IMR-90 (cell line): ENCODE measurements at regions of chrX and their contacts with region 1.

Region 1: DNA sequence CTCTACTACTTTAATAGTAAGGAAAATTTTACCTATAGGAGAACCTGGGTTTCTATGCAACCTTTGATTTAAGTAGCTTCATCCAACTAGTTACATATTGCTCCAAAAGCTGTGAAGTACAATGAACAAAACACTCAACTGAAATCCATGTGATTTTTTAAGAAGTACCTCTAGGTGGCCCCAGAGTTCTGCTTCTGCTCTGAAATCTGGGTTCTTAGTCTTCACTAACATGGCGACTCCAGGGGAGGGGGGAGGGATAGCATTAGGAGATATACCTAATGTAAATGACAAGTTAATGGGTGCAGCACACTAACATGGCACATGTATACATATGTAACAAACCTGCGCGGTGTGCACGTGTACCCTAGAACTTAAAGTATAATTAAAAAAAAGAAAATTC is 73.4 kb upstream of the MAGEB2 start:
- DNase-seq: peak; percentile 59
- ATAC-seq: peak; percentile 94
- H3K4me3 ChIP-seq: no peak overlapping the region
- H3K27ac ChIP-seq: no peak overlapping the region
- H3K4me1 ChIP-seq: no peaks in the 10 kb centered on the region
- H3K27me3 ChIP-seq: no peaks in the 10 kb centered on the region
- CTCF ChIP-seq: peak; percentile 58
- POLR2A ChIP-seq: no peak
- RAD21 ChIP-seq: peak; percentile 65

Region 2: GRCh38 chrX:30275498-30275897 is 133.5 kb after region 1 on chrX:
- CTCF ChIA-PET with region 1: no interaction called
- POLR2A ChIA-PET with region 1: no interaction called
- dilution Hi-C with region 1: no loop called
- in situ Hi-C with region 1: no loop called
- intact Hi-C with region 1: loop called (anchors 1 kb)
- DNase-seq: peak; percentile 13
- ATAC-seq: no peak
- H3K4me3 ChIP-seq: no peak overlapping the region
- H3K27ac ChIP-seq: no peak overlapping the region
- H3K4me1 ChIP-seq: no peaks in the 10 kb centered on the region
- H3K27me3 ChIP-seq: no peaks in the 10 kb centered on the region
- CTCF ChIP-seq: peak; percentile 41
- POLR2A ChIP-seq: no peak
- RAD21 ChIP-seq: peak; percentile 55

Region 3: DNA sequence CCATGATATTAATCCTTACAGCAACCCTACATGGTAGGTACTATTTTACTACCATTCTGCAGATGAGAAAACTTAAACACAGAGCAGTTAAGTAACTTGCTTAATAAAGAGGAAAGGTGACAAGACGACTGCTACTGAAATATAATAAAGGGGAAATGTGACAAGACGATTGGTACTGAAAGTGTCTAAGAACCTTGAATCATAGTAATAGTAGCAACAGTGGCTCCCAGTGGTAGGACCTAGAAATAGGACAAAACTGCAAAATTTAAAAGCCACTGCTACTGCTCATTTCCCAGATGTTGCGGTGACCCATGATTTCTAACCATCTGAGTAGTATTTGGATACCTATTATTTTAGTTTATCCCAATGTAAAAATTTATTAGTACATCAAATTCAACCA is 346.1 kb after region 1 on chrX:
- CTCF ChIA-PET with region 1: no interaction called
- POLR2A ChIA-PET with region 1: no interaction called
- dilution Hi-C with region 1: no loop called
- in situ Hi-C with region 1: no loop called
- intact Hi-C with region 1: loop called (anchors 5 kb)
- DNase-seq: peak; percentile 1
- ATAC-seq: no peak
- H3K4me3 ChIP-seq: no peak overlapping the region
- H3K27ac ChIP-seq: no peak overlapping the region
- H3K4me1 ChIP-seq: no peaks in the 10 kb centered on the region
- H3K27me3 ChIP-seq: no peaks in the 10 kb centered on the region
- CTCF ChIP-seq: peak; percentile 24; the same call in 1 of the 2 replicates
- POLR2A ChIP-seq: no peak
- RAD21 ChIP-seq: no peak

Region 4: DNA sequence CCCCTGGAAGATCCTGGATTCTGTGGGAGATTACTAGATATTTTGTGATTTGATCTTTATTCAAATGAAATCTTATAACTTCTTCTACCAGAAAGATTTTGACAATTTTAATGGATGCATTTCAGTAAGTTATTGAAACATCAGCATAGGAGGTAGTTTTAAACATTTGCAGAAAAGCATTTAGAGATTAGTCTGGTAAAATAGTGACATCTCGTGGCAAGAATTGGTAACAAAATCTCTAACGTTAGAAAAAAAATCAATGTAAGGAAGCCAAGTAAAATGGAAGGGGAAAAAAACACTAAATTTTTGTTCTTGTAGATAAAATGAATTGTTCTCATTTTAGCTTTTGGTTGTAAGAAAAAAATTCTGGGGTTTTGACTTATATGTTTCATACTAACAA is 362.3 kb after region 1 on chrX:
- CTCF ChIA-PET with region 1: no interaction called
- POLR2A ChIA-PET with region 1: no interaction called
- dilution Hi-C with region 1: no loop called
- in situ Hi-C with region 1: loop called (anchors 10 kb)
- intact Hi-C with region 1: loop called (anchors 1 kb)
- DNase-seq: peak; percentile 41
- ATAC-seq: no peak
- H3K4me3 ChIP-seq: no peak overlapping the region
- H3K27ac ChIP-seq: no peak overlapping the region
- H3K4me1 ChIP-seq: no peaks in the 10 kb centered on the region
- H3K27me3 ChIP-seq: no peaks in the 10 kb centered on the region; the same call in none of the 2 replicates
- CTCF ChIP-seq: peak; percentile 65
- POLR2A ChIP-seq: no peak
- RAD21 ChIP-seq: peak; percentile 64

Region 5: GRCh38 chrX:30767454-30767853 is 625.5 kb after region 1 on chrX:
- CTCF ChIA-PET with region 1: no interaction called
- POLR2A ChIA-PET with region 1: no interaction called
- dilution Hi-C with region 1: no loop called
- in situ Hi-C with region 1: no loop called
- intact Hi-C with region 1: no loop called
- DNase-seq: no peak
- ATAC-seq: no peak
- H3K4me3 ChIP-seq: no peak overlapping the region
- H3K27ac ChIP-seq: no peak overlapping the region
- H3K4me1 ChIP-seq: no peaks in the 10 kb centered on the region
- H3K27me3 ChIP-seq: no peaks in the 10 kb centered on the region
- CTCF ChIP-seq: no peak
- POLR2A ChIP-seq: no peak
- RAD21 ChIP-seq: no peak